ENCODE measurements at regions of chr10 and their contacts with region 1.

Region 1: DNA sequence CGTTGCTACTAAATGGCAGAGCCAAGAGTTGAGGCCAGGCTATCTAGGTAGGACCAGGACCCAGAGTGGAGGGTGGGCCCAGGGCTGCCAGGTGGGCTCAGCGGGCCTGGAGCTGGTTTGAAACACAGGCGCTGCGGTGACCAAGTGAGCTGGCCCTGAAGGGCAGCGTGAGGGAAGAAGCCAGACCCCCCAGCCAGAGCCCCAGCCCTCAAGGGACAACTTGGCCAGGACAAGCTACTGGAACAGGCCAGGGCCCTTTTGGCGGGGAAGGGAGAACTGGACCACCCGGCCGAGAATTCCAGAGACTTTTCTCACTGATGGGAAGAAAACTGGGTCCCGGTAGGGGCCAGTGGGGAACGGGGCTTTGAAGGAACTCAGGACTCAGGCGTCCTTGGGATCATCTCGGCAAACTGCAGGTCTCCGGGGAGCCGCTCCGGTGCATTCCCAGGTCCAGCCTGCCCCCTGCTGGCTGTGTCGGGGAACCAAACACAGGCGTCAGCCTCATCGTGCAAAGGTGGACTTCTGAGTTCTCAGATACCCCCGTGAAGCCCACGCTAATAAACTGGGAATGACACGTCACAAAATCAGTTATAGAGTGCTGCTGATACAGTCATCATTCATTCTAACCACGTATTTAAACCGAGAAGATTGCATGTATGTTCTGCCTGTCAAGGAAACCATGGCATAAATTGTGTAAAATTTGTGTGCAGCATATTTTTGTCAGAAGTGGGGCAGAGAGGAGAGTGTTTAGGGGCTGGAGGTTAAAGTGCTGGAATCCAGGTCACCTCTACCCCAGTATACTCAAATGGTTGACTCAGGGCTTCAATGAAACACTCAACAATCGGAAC is 76.0 kb upstream of the CPXM2 start:
- DNase-seq: peak in 1 of 2 donors; percentile 86
- H3K4me3 ChIP-seq: peak overlapping the region in 1 of 2 donors; percentile 37
- H3K27ac ChIP-seq: no peak overlapping the region
- H3K4me1 ChIP-seq: peaks cover under 1 to 4% of the 10 kb centered on the region in 2 donors
- H3K27me3 ChIP-seq: no peaks in the 10 kb centered on the region
- CTCF ChIP-seq: peak; percentile 92 to 95 (median 94)

Region 2: DNA sequence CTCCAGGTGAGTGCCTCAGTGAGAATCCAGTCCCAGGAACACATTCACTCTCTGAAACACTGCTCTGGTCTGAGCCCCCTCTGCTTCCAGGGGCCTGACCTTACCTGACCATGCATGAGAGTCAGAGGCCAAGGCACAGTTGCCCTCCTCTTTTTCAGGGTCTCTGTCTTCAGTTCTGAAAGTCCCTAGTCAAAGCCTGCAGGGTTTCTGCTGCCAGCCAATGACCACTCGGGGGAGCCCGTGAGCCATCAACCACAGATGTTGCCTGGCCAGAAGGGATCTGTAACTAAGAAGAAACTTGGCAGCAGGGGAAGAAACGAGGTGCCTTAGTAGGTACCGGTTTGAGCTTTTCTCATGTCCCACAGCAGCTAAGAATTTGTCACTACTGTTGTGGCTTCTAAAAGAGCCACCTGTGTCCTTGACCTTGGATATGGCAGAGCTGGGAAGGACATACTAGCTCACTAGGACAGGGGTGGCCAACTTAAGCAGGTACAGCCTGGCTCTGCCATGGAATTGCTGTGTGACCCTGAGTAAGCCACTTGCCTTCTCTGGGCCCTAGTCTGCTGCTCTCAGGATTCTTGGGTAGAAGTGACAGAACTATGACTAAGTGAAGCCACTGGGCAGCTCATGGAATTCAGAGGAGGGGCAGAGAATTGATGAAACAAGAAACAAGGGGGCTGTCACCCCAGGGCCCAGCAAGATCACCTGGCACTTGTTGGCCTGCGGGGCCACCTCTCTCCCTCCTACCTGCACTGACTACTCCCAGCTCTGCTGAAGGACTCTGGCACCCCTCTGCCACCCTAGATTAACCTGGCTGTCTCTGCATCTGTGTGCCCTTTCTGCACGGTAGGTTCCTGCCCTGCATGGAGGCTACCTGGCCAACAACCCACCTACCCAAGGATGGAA is 385.3 kb before region 1 on chr10:
- intact Hi-C with region 1: loop called (anchors 1 kb)
- DNase-seq: peak; percentile 39 to 86
- H3K4me3 ChIP-seq: no peak overlapping the region
- H3K27ac ChIP-seq: no peak overlapping the region
- H3K4me1 ChIP-seq: peaks cover 3 to 10% of the 10 kb centered on the region in 2 donors
- H3K27me3 ChIP-seq: no peaks in the 10 kb centered on the region
- CTCF ChIP-seq: peak; percentile 73 to 90 (median 85)

Region 3: DNA sequence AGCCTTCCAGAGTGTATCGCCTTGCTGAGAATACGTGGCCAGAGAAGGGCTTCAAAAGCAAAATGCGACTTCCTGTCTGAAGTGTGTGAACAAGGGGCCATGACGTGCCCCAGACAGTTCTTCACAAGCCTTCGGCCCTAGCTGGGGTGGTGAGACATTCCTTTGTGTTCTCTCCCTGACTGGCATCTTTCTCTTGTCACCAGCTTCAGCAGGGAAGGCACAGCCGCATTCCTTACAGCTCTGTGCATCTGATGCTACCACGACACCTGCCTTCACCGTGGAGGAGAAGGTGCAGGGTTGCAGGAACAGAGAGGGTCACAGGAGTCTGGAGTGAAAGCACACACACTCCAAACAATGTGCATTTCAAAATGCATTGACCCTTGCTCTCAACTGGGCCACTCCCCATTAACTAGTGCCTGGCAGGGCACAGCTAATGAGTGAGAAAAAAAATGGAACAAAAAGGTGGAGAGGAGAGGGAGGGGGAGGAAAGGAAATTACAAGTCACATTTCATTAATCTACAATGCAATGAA is 208.1 kb before region 1 on chr10:
- intact Hi-C with region 1: loop called (anchors 5 kb)
- DNase-seq: no peak
- H3K4me3 ChIP-seq: no peak overlapping the region
- H3K27ac ChIP-seq: no peak overlapping the region
- H3K4me1 ChIP-seq: no peaks in the 10 kb centered on the region
- H3K27me3 ChIP-seq: no peaks in the 10 kb centered on the region
- CTCF ChIP-seq: no peak

Region 4: DNA sequence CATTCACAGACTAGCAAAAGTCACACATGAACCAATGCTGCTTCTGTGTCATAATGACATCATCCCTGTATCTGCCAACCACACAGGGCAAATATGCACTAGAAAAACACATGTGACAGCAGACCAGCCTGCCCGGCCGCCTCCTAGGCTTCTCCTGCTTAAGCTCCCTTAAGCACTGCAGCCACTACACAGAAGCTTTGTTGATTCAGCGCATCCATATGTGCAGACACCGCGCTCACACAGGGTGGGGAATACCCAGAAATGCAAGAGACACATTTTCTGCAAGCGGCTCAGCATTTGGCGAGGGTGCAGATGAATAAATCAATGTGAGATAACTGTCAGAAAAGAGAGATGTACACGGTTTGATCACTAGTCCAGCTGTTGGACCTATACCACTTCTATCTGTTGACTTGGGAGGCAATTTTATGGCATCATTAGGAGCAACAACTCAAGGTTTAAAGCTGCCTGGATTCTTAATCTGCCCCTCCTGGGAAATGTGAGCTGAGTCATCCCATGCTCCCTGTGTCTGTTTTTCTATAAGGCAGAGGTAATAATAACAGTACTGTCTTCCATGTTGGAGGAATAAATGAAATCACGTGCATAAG is 109.4 kb before region 1 on chr10:
- intact Hi-C with region 1: loop called (anchors 5 kb)
- DNase-seq: peak in 1 of 2 donors; percentile 79
- H3K4me3 ChIP-seq: no peak overlapping the region
- H3K27ac ChIP-seq: peak overlapping the region; percentile 28 to 65
- H3K4me1 ChIP-seq: peaks cover 7 to 49% of the 10 kb centered on the region in 2 donors
- H3K27me3 ChIP-seq: no peaks in the 10 kb centered on the region
- CTCF ChIP-seq: no peak

Region 5: DNA sequence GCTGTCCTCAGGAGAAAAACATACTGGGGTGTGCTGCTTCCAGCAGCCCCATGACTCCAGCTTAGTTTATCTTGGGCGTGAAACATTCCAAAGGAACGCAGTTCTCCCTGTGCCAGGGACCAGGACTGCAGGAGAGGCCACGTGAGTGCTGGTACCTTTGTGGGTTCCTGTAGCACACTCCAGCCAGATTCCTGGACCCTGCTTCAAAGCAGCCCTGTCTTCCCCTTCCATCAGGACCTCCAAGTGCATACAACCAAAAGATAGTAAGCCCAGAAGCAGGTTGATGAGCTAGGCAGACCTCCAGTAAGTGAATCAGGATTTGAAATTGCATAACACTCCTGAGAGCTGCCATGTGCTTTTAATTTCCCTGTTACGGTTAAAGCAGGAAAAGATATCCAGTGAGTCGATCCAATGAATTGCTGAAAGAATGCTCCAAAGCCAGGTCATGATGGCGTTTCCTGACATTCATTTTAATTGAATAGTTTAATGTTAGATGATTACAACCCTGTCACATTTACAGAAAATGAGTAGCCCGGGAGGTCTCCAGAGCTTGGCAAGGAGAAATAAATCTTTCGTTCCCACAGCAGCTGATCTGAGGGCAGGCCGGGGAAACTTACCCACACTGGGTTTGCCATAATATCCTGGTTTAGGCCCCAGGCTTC is 37.1 kb before region 1 on chr10:
- intact Hi-C with region 1: loop called (anchors 2 kb)
- DNase-seq: peak in 1 of 2 donors; percentile 79
- H3K4me3 ChIP-seq: peak overlapping the region in 1 of 2 donors; percentile 28
- H3K27ac ChIP-seq: peak overlapping the region; percentile 81 to 86
- H3K4me1 ChIP-seq: peaks cover 4 to 13% of the 10 kb centered on the region in 2 donors
- H3K27me3 ChIP-seq: no peaks in the 10 kb centered on the region
- CTCF ChIP-seq: no peak